B cell (primary cell): ENCODE measurements at regions of chr12 and their contacts with region 1.

Region 1: GRCh38 chr12:65902500-65902899 is 78.2 kb downstream of the HMGA2 start:
- DNase-seq: no peak
- ATAC-seq: no peak
- H3K4me3 ChIP-seq: no peak overlapping the region
- H3K4me3 Mint-ChIP-seq: no peak overlapping the region
- H3K27ac ChIP-seq: no peak overlapping the region
- H3K27ac Mint-ChIP-seq: no peak overlapping the region
- H3K4me1 ChIP-seq: no peaks in the 10 kb centered on the region
- H3K4me1 Mint-ChIP-seq: no peaks in the 10 kb centered on the region
- H3K27me3 ChIP-seq: peaks cover 0 to 3% (median 0%) of the 10 kb centered on the region in 4 experiments
- H3K27me3 Mint-ChIP-seq: peaks cover 8% of the 10 kb centered on the region
- CTCF ChIP-seq: no peak

Region 2: GRCh38 chr12:65962921-65963861 is 60.7 kb after region 1 on chr12:
- CTCF ChIA-PET with region 1: no interaction called
- POLR2A ChIA-PET with region 1: no interaction called
- intact Hi-C with region 1: loop called (anchors 10 kb)
- DNase-seq: no peak
- ATAC-seq: no peak
- H3K4me3 ChIP-seq: no peak overlapping the region
- H3K4me3 Mint-ChIP-seq: peak overlapping the region; percentile 5
- H3K27ac ChIP-seq: no peak overlapping the region
- H3K27ac Mint-ChIP-seq: no peak overlapping the region
- H3K4me1 ChIP-seq: no peaks in the 10 kb centered on the region
- H3K4me1 Mint-ChIP-seq: peaks cover 7% of the 10 kb centered on the region
- H3K27me3 ChIP-seq: peaks cover 0 to 12% (median 6%) of the 10 kb centered on the region in 4 experiments
- H3K27me3 Mint-ChIP-seq: peaks cover 35% of the 10 kb centered on the region
- CTCF ChIP-seq: no peak